ENCODE measurements at regions of chr10 and their contacts with region 1.

Region 1: DNA sequence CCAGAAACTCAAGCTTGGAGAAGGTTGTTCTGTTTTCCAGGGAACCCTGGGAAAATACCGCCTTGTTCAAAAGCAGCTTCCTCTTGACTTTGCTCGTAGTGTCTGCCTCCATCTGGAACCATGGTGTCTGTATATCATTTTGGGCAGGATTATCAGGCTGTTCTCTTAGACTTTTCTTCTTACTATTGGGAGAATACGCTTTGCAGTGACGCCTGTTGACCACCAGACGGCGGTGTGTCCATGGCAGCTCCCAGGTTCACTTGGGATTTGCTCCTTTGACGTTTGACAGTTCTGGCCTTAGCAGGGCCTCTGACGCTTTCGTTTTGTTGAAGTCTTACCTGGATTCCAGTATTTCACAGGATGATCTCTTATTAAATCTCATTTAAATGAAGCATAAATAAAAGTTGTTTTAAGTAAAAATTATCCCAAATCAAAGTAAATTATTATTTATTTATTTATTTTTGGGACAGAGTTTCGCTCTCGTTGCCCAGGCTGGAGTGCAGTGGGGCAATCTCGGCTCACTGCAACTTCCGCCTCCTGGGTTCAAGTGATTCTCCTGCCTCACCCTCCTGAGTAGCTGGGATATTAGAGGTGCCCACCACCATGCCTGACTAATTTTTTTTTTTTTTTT is 41.8 kb upstream of the GJD4 start:
- DNase-seq: peak in 2 of 3 donors; percentile 50 to 71
- ATAC-seq: peak; percentile 35 to 47
- H3K4me3 ChIP-seq: no peak overlapping the region
- H3K27ac ChIP-seq: peak overlapping the region; percentile 41
- H3K4me1 ChIP-seq: peaks cover 15% of the 10 kb centered on the region
- H3K27me3 ChIP-seq: no peaks in the 10 kb centered on the region

Region 2: DNA sequence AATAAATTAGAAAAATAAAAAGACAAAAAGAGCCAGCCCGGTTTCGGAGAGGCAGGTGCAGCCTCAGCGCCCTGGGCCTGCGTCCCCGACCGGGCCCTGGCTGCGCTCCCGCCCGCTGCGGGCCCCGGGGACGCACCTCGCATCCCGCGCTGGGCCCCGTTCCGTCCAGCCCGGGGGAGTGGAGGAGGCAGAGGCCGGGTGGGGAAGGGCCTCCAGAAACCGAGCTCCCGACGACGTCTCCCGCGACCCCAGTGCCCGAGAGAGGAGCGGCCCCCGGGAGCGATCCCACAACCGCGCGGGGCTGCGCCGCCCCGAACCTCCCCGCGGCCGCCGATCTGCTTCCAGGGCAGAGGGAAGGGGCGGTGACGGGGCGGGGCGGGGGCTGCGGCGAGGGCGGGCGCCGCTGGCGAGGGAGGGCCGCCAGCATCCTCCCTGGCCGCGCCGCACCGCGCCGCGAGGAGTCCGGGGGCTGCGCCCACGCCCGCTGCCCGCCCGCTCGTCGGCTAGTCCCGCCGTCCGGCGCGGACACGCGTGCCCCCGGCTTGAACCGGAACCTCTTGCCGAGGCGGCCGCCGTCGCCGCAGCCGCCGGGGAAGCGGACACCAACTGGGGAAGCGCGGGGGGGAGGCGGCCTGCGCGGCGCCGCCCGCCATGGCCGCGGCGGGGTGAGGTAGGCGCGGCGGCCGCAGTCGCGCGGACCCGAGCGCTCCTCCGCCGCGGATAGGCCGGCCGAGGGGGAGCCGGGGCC is 227.1 kb before region 1 on chr10 and contains the start of gene CCNY:
- intact Hi-C with region 1: loop called in 2 of 4 experiments (anchors 5 to 10 kb)
- DNase-seq: peak; percentile 81 to 94 (median 93)
- ATAC-seq: peak; percentile 91 to 94
- H3K4me3 ChIP-seq: peak within 1 kb of the TSS; percentile 80
- H3K27ac ChIP-seq: peak within 1 kb of the TSS; percentile 94
- H3K4me1 ChIP-seq: peaks cover 25% of the 10 kb centered on the region
- H3K27me3 ChIP-seq: no peaks in the 10 kb centered on the region
- total RNA-seq, gene CCNY: 63.7 to 72.1 (median 66.8) TPM

Region 3: DNA sequence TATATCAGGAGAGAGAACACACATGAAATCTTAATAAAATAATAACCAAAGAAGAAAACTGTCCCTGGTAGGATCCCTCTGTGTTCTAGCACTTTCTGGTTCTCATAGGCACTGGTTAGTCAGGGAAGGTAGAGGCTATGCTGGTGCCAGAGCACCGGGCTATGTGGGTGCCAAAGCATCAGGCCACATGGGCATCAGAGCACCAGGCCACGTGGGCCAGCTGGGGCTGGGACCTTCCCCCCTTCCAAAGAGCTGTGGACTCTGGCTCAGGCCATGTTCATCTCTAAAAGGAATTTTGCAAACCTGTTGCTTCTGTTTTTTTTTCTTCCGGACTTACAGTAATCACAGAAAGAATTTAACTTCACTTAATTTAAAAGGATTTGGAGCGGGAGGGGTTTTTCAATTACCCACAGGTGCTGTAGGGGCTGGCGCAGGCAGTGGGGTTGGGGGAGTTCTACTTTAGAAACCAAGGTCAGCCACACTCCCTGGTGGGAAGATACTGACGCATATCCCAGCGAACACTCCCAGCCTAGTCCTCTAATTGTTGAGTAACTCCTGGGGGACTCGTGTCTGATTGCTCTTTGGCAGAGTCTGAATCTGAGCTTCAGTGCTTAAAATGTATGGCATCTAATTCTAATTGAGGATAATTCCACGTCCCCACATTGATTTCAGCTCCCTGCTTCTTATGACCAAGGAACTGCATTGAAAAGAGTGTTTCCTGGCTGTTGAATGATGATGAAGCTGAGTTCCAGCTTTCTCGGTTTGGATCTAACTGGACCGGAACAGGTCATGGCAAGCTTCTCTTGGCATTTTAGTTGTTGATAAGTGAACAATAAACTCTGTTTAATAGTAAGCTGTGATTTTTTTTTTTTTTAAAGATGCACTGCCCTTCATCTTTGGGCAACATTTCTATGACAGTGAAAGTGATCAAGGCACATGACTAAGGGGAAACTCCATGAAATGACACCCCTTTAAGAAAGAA is 189.4 kb after region 1 on chr10:
- intact Hi-C with region 1: no loop called
- DNase-seq: peak; percentile 59 to 74 (median 61)
- ATAC-seq: peak; percentile 92
- H3K4me3 ChIP-seq: no peak overlapping the region
- H3K27ac ChIP-seq: no peak overlapping the region
- H3K4me1 ChIP-seq: no peaks in the 10 kb centered on the region
- H3K27me3 ChIP-seq: no peaks in the 10 kb centered on the region